Mucosa of descending colon (tissue), 3 donors: ENCODE measurements at regions of chr11 and their contacts with region 1.

Region 1: GRCh38 chr11:118198370-118198769 is 21.9 kb upstream of the SCN2B start:
- DNase-seq: peak; percentile 86 to 93 (median 87)
- ATAC-seq: peak; percentile 45
- H3K4me3 ChIP-seq: no peak overlapping the region
- H3K4me1 ChIP-seq: peaks cover 27% of the 10 kb centered on the region
- CTCF ChIP-seq: peak; percentile 84

Region 2: GRCh38 chr11:118156531-118157185 is 41.7 kb before region 1 on chr11:
- intact Hi-C with region 1: no loop called
- DNase-seq: no peak
- ATAC-seq: peak; percentile 20
- H3K4me3 ChIP-seq: no peak overlapping the region
- H3K4me1 ChIP-seq: peaks cover 13% of the 10 kb centered on the region
- CTCF ChIP-seq: no peak

Region 3: GRCh38 chr11:118263695-118264567 is 65.6 kb after region 1 on chr11 and contains the start of gene MPZL2:
- intact Hi-C with region 1: loop called in 1 of 2 experiments (anchors 5 kb)
- DNase-seq: peak; percentile 80 to 83 (median 82)
- ATAC-seq: peak; percentile 87
- H3K4me3 ChIP-seq: peak within 1 kb of the TSS; percentile 11
- H3K4me1 ChIP-seq: peaks cover 16% of the 10 kb centered on the region
- CTCF ChIP-seq: no peak
- total RNA-seq, gene MPZL2: 34.4 to 83.1 (median 72.4) TPM

Region 4: DNA sequence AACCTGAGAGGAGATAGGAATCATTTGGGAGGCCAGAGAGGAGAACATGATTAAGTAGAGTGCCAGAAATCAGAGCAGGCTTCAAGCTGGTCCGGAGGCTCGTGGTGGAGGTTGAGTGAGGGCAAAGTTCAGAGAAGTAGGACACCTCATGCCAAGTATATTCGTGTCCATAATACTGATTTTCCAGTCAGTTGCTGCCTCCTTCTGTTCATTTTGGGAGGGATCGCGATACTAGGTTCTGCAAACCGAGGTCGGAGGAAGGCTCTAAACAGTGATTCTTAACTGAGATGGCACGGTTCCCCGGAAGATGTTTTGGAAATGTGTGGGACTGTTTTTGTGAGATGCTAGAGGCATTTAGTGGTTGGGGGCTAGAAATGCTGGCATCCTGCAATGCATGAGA is 92.6 kb after region 1 on chr11:
- intact Hi-C with region 1: loop called (anchors 5 to 10 kb)
- DNase-seq: peak in 2 of 3 donors; percentile 55 to 82
- ATAC-seq: peak; percentile 91
- H3K4me3 ChIP-seq: no peak overlapping the region
- H3K4me1 ChIP-seq: peaks cover 6% of the 10 kb centered on the region
- CTCF ChIP-seq: no peak

Region 5: GRCh38 chr11:118353084-118353710 is 154.8 kb after region 1 on chr11:
- intact Hi-C with region 1: loop called (anchors 5 to 10 kb)
- DNase-seq: no peak
- ATAC-seq: no peak
- H3K4me3 ChIP-seq: no peak overlapping the region
- H3K4me1 ChIP-seq: no peaks in the 10 kb centered on the region
- CTCF ChIP-seq: peak; percentile 34

Region 6: GRCh38 chr11:118359295-118359958 is 161.1 kb after region 1 on chr11 and contains the start of gene UBE4A:
- intact Hi-C with region 1: loop called (anchors 5 to 10 kb)
- DNase-seq: peak; percentile 97 to 99 (median 98)
- ATAC-seq: peak; percentile 100
- H3K4me3 ChIP-seq: peak within 1 kb of the TSS; percentile 37
- H3K4me1 ChIP-seq: peaks cover 4% of the 10 kb centered on the region
- CTCF ChIP-seq: no peak
- total RNA-seq, gene UBE4A: 42.3 to 50.1 (median 46.1) TPM